Testis (tissue), 5 donors: ENCODE measurements at regions of chr6 and their contacts with region 1.

Region 1: DNA sequence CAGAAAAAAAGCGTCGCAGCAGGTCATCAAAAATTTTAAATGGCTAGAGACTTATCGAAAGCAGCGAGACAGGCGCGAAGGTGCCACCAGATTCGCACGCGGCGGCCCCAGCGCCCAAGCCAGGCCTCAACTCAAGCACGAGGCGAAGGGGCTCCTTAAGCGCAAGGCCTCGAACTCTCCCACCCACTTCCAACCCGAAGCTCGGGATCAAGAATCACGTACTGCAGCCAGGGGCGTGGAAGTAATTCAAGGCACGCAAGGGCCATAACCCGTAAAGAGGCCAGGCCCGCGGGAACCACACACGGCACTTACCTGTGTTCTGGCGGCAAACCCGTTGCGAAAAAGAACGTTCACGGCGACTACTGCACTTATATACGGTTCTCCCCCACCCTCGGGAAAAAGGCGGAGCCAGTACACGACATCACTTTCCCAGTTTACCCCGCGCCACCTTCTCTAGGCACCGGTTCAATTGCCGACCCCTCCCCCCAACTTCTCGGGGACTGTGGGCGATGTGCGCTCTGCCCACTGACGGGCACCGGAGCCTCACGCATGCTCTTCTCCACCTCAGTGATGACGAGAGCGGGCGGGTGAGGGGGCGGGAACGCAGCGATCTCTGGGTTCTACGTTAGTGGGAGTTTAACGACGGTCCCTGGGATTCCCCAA is at the start of gene EEF1A1:
- DNase-seq: peak; percentile 99
- H3K4me3 ChIP-seq: peak within 1 kb of the TSS; percentile 80 to 85
- H3K27ac ChIP-seq: peak within 1 kb of the TSS; percentile 100
- H3K4me1 ChIP-seq: peaks cover 30% of the 10 kb centered on the region
- H3K27me3 ChIP-seq: no peaks in the 10 kb centered on the region
- CTCF ChIP-seq: no peak
- POLR2A ChIP-seq: peak; percentile 89
- total RNA-seq, gene EEF1A1: 2,869 to 5,046 TPM

Region 2: DNA sequence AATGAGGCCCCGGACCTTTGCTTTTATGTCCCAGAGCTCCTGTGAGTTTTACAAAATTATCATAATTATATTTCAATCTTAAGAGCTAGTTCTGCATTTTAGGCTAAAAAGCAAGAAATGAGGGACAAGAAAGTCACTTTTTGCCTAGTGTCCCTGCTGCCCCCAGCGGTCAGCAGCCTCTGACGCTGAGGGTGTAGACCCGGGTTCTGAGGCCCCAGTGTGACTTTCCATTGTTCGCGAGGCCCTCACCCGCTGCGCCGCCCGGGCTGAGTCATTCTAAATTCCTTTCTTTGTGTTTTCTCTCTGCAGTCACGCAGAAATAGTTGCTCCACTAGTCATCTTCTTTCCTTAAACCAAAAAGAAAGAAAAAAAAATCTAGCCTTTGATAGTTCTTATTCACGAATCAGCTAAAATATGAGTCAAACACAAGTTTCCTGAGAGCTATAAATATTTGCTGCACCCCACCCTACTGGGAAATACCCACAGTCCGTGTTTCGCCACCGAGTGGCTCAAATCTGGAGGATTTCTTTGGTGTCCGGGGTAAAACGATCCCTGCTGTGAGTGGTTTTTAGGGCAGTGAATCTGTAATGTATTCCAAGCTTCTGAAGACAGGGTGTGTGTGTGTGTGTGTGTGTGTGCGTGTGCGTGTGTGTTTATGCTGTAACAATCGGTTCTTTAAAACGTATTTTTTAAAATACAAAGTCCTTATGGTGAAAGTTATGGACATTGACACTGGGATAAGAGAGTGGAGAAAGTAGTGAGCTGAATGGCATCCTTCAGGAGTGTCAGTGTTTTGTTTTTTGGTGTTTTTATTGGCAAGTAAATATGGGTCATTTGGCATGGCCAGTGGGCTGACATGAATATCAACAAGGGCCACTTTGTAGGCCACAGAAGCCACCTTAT is 59.7 kb after region 1 on chr6:
- intact Hi-C with region 1: loop called (anchors 10 kb)
- DNase-seq: peak; percentile 77
- H3K4me3 ChIP-seq: peak overlapping the region in 1 of 2 donors; percentile 37
- H3K27ac ChIP-seq: peak overlapping the region; percentile 77 to 96
- H3K4me1 ChIP-seq: peaks cover 29% of the 10 kb centered on the region
- H3K27me3 ChIP-seq: no peaks in the 10 kb centered on the region
- CTCF ChIP-seq: peak; percentile 19 to 30 (median 22)
- POLR2A ChIP-seq: no peak

Region 3: DNA sequence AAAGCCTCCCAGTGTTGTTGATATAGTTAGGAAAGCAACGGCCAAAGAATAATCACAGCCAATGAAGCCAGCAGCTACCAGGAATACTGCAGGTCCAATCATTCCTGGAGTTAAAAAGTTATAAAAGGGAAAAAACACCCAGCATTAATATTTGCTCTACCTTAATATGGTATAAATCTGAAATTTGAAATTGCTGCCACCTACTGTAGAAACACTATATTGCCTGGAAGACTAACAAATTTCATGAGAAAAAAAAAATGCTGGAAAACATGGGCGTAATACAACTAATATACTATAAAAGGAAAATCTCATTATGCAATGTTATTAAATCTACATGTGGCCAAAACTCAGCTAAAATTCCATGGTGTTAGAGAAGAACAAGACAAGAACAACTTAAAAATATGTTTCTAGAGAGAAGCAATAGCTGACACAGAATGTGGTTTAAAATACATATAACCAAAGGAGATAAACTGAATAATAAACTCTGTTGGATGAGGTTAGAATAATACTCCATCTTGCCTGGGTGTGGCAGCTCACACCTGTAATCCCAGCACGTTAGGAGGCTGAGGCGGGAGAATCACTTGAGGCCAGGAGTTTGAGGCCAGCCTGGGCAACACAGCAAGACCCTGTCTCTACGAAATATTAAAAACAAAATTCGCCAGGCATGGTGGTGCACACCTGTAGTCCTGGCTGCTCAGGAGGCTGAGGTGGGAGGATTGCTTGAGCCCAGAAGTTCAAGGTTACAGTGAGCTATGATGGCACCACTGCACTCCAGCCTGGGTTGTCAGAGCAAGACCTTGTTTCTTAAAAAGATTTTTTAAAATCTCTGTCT is 89.8 kb after region 1 on chr6:
- intact Hi-C with region 1: loop called (anchors 10 kb)
- DNase-seq: no peak
- H3K4me3 ChIP-seq: no peak overlapping the region
- H3K27ac ChIP-seq: no peak overlapping the region
- H3K4me1 ChIP-seq: no peaks in the 10 kb centered on the region
- H3K27me3 ChIP-seq: no peaks in the 10 kb centered on the region
- CTCF ChIP-seq: peak in 2 of 3 experiments; percentile 37 to 65
- POLR2A ChIP-seq: no peak

Region 4: GRCh38 chr6:73695619-73696421 is 175.0 kb after region 1 on chr6 and contains the start of gene CD109:
- intact Hi-C with region 1: no loop called
- DNase-seq: peak; percentile 40
- H3K4me3 ChIP-seq: peak within 1 kb of the TSS; percentile 53 to 65
- H3K27ac ChIP-seq: peak within 1 kb of the TSS in 1 of 2 donors; percentile 28
- H3K4me1 ChIP-seq: no peaks in the 10 kb centered on the region
- H3K27me3 ChIP-seq: no peaks in the 10 kb centered on the region
- CTCF ChIP-seq: no peak
- POLR2A ChIP-seq: no peak
- total RNA-seq, gene CD109: 4.0 to 5.4 TPM